CD8-positive, alpha-beta memory T cell (primary cell): ENCODE measurements at regions of chr6 and their contacts with region 1.

Region 1: GRCh38 chr6:46129629-46130511 is at the start of gene ENPP4:
- DNase-seq: peak; percentile 84 to 96 (median 92)
- H3K4me3 ChIP-seq: peak within 1 kb of the TSS; percentile 82
- H3K4me3 Mint-ChIP-seq: peak within 1 kb of the TSS; percentile 96 to 100 (median 98)
- H3K27ac ChIP-seq: peak within 1 kb of the TSS; percentile 81
- H3K27ac Mint-ChIP-seq: peak within 1 kb of the TSS; percentile 88 to 98 (median 96)
- H3K4me1 ChIP-seq: peaks cover 25% of the 10 kb centered on the region
- H3K4me1 Mint-ChIP-seq: peaks cover 43 to 77% (median 74%) of the 10 kb centered on the region in 3 donors
- H3K27me3 ChIP-seq: no peaks in the 10 kb centered on the region
- H3K27me3 Mint-ChIP-seq: peaks cover 0 to 1% of the 10 kb centered on the region in 2 donors
- total RNA-seq, gene ENPP4: 13.0 to 13.2 TPM

Region 2: DNA sequence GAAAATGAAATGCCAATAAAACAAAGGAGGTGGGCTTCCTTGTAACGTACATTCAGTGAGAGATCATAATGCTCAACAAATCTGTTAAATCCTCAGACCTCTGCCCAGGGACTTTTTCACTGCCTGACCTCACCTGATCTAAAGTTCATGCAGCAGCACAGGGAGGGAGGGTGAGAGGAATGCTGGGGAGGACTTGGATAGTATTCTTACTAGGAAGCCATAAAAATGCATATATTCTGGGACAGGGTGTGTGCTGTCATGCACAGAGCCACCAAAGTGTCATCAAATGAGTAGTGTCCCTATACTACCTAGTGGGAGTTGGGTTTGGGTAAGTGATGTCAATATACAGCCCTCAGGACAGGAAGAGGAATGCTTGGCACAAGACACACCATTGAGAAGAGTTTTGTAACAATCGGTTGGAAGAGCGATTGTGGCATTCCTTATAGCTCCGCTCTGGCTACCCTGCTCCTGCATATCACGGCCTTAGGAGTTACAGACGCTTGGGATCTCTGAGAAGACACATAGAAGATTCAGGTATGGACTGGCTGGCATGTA is 146.7 kb before region 1 on chr6:
- CTCF ChIA-PET with region 1: no interaction called
- POLR2A ChIA-PET with region 1: no interaction called
- DNase-seq: no peak
- H3K4me3 ChIP-seq: no peak overlapping the region
- H3K4me3 Mint-ChIP-seq: no peak overlapping the region
- H3K27ac ChIP-seq: no peak overlapping the region
- H3K27ac Mint-ChIP-seq: peak overlapping the region in 1 of 8 donors; percentile 18
- H3K4me1 ChIP-seq: no peaks in the 10 kb centered on the region
- H3K4me1 Mint-ChIP-seq: peaks cover 15 to 22% (median 15%) of the 10 kb centered on the region in 3 donors
- H3K27me3 ChIP-seq: no peaks in the 10 kb centered on the region
- H3K27me3 Mint-ChIP-seq: no peaks in the 10 kb centered on the region

Region 3: DNA sequence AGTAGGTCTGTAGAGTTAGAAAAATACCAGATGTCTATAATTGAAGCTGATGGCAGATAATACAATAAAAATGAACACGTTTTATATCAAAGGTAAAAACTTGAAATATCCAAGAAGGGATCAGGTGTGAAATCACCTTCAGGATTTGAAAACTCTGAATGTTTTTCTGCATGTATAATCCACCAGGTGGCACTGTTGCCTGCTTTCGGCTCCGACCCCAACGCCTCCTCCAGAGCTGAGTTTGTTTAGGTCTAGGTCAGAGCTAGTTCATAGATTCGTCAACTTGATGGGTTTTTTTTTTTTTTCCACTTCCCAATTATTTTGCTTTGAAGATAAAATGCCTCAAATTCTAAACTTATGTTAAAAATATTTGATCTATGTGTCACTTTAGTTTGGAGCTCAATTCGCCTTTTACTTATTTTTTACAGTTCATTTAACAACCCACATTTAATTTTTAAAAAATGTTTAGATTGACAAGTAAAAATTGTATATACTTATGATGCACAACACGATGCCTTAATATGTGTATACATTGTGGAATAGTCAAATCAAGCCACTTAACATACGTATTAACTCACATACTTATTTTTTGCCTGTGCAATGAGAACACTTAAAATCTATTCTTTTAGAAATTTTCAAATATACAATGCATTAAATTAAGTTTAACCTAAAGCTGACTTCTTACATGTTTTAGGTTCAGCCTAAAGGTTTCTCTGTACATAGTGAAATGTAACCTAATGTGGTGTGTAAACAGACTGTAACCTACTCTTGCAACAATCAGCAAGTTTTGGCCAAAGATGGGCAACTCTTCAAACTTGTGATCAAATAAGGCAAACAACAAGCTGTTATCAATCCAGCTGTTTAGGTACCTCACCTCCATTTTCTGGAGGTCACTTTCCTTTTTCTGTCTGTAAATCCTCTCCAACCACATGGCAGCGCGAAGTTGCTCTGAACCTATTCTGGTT is 39.5 kb before region 1 on chr6:
- CTCF ChIA-PET with region 1: interaction called, 14 read pairs
- POLR2A ChIA-PET with region 1: no interaction called
- DNase-seq: peak; percentile 26 to 73 (median 40)
- H3K4me3 ChIP-seq: no peak overlapping the region
- H3K4me3 Mint-ChIP-seq: no peak overlapping the region
- H3K27ac ChIP-seq: no peak overlapping the region
- H3K27ac Mint-ChIP-seq: no peak overlapping the region
- H3K4me1 ChIP-seq: no peaks in the 10 kb centered on the region
- H3K4me1 Mint-ChIP-seq: no peaks in the 10 kb centered on the region
- H3K27me3 ChIP-seq: no peaks in the 10 kb centered on the region
- H3K27me3 Mint-ChIP-seq: peaks cover 16 to 27% of the 10 kb centered on the region in 2 donors

Region 4: GRCh38 chr6:46118836-46119235 is 11.0 kb before region 1 on chr6:
- CTCF ChIA-PET with region 1: interaction called, 12 read pairs
- POLR2A ChIA-PET with region 1: interaction called, 5 read pairs
- DNase-seq: no peak
- H3K4me3 ChIP-seq: no peak overlapping the region
- H3K4me3 Mint-ChIP-seq: peak overlapping the region in 1 of 7 donors; percentile 44
- H3K27ac ChIP-seq: no peak overlapping the region
- H3K27ac Mint-ChIP-seq: no peak overlapping the region
- H3K4me1 ChIP-seq: peaks cover 5% of the 10 kb centered on the region
- H3K4me1 Mint-ChIP-seq: peaks cover 36 to 68% (median 65%) of the 10 kb centered on the region in 3 donors
- H3K27me3 ChIP-seq: no peaks in the 10 kb centered on the region
- H3K27me3 Mint-ChIP-seq: peaks cover 0 to 1% of the 10 kb centered on the region in 2 donors

Region 5: DNA sequence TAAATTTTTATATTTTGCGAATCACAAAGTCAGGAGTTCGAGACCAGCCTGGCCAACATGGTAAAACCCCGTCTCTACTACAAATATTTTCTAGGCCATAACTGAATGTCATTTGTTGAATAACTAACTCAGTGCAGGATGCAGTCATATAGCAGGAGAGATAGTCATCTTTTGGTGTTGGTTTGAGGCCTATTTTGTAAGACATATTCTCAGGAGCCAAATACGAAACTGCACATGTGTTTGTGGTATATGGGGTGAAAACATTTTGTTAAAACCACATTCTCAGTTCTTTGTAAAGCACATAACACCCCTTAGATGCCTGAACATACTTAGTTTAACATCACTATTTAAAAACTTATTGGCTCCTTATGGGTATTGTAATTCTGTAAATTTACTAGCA is 45.6 kb after region 1 on chr6:
- CTCF ChIA-PET with region 1: interaction called, 3 read pairs
- POLR2A ChIA-PET with region 1: interaction called, 11 read pairs
- DNase-seq: peak in 2 of 5 donors; percentile 6 to 76
- H3K4me3 ChIP-seq: no peak overlapping the region
- H3K4me3 Mint-ChIP-seq: peak overlapping the region in 6 of 7 donors; percentile 19 to 84 (median 73)
- H3K27ac ChIP-seq: no peak overlapping the region
- H3K27ac Mint-ChIP-seq: peak overlapping the region; percentile 83 to 98 (median 95)
- H3K4me1 ChIP-seq: peaks cover 36% of the 10 kb centered on the region
- H3K4me1 Mint-ChIP-seq: peaks cover 39 to 51% (median 51%) of the 10 kb centered on the region in 3 donors
- H3K27me3 ChIP-seq: no peaks in the 10 kb centered on the region
- H3K27me3 Mint-ChIP-seq: peaks cover 0 to 2% of the 10 kb centered on the region in 2 donors